ENCODE measurements at regions of chr1 and their contacts with region 1.

Region 1: DNA sequence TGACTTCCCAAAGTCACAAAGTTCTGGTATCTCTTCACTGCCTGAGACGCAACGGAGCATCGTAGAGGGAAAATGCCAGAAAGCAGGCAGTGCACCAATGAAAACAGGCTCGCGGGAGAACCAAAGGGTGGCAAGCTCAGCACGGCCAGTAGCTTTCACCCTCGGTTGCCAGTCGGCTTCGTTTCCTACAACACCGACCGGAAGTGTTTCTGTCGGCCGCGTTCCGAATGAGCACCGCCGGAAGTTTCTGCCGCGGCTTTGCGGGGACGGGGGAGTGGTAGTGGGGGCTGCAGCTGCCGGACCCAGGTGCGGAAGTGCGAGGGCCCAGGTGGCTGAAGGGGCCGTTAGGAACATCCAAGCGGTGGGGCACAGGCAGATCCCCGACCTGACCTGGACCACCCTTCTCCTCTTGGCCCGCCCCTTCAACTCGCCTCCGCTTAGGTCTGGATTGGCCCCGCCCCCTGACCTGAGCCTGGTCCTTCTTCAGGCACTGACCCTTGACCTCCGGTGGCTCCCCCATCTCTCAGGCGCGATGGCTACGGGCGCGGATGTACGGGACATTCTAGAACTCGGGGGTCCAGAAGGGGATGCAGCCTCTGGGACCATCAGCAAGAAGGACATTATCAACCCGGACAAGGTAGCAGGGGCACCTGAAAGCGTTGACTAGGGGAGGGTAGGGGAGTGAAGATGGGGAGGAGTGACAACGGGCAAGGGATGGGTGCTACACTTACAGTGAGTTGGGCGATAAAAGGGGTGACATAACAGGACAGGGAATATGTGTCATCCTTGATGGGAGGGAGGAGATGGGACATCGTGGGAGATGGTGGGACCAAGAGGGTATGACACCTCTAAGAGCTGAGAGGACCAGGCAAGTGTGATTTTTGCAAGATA is at the start of gene DMAP1:
- DNase-seq: peak; percentile 71
- H3K4me3 ChIP-seq: peak within 1 kb of the TSS; percentile 69 to 94 (median 72)
- H3K27ac ChIP-seq: peak within 1 kb of the TSS; percentile 29
- H3K4me1 ChIP-seq: peaks cover 18% of the 10 kb centered on the region
- H3K27me3 ChIP-seq: no peaks in the 10 kb centered on the region
- CTCF ChIP-seq: peak in 1 of 2 donors; percentile 30
- total RNA-seq, gene DMAP1: 21.5 to 30.0 TPM

Region 2: GRCh38 chr1:44008259-44008658 is 205.2 kb before region 1 on chr1:
- CTCF ChIA-PET with region 1: no interaction called
- dilution Hi-C with region 1: no loop called
- in situ Hi-C with region 1: no loop called
- intact Hi-C with region 1: loop called (anchors 5 kb)
- DNase-seq: no peak
- H3K4me3 ChIP-seq: no peak overlapping the region
- H3K27ac ChIP-seq: no peak overlapping the region
- H3K4me1 ChIP-seq: no peaks in the 10 kb centered on the region
- H3K27me3 ChIP-seq: no peaks in the 10 kb centered on the region
- CTCF ChIP-seq: no peak

Region 3: DNA sequence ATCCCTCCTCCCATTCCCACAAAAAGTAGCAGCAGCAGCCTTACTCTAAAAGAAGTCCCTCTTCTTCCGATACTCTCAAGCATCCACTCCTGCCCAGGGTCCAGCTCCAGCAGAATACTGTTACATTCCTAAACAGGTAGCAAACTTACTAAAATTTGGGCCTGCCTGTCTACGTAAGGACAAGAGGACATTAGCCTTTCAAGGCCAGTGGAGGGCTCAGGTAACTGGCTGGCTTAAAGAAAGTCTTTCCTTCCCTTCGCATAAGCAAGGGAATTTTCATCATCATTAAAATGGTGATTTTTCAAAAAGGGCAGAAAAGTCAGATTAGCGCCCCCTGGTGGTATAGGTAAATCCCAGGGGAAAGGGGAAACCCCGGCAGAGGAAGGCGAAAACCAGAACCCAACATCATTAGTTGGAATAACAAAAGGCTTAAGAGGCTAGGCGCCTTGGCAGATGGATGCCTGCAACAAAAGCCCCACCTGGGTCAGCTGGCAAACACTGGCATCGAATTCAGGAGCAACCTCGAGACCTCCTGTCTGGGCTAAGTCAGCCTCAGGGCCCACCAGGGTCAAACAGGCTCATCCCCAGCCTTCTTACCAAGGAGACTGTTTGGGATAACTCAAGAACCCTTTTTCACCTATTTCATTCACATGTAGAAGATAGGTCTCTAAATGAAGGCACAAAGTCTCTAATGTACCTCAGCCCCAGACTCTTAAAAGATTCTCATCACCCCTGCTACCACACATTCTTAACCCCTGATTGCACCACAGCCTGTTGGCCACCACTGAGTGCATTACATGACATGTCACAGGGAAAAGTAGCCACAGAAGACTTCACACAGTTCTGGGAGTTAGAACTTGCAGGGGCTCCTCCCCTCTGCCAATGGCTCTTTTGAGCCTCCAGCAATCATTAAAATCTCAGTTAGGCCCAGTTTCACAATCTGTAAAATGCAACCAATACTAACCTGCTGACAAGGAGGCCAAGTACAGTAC is 104.9 kb after region 1 on chr1:
- CTCF ChIA-PET with region 1: no interaction called
- dilution Hi-C with region 1: no loop called
- in situ Hi-C with region 1: no loop called
- intact Hi-C with region 1: loop called (anchors 1 kb)
- DNase-seq: peak; percentile 24
- H3K4me3 ChIP-seq: no peak overlapping the region
- H3K27ac ChIP-seq: no peak overlapping the region
- H3K4me1 ChIP-seq: no peaks in the 10 kb centered on the region
- H3K27me3 ChIP-seq: no peaks in the 10 kb centered on the region
- CTCF ChIP-seq: peak; percentile 76 to 81

Region 4: GRCh38 chr1:44377925-44378784 is 164.7 kb after region 1 on chr1:
- CTCF ChIA-PET with region 1: interaction called, 3 read pairs
- dilution Hi-C with region 1: no loop called
- in situ Hi-C with region 1: no loop called
- intact Hi-C with region 1: loop called (anchors 1 kb)
- DNase-seq: peak; percentile 15
- H3K4me3 ChIP-seq: no peak overlapping the region
- H3K27ac ChIP-seq: no peak overlapping the region
- H3K4me1 ChIP-seq: no peaks in the 10 kb centered on the region
- H3K27me3 ChIP-seq: peaks cover 4% of the 10 kb centered on the region
- CTCF ChIP-seq: peak; percentile 75 to 81

Region 5: DNA sequence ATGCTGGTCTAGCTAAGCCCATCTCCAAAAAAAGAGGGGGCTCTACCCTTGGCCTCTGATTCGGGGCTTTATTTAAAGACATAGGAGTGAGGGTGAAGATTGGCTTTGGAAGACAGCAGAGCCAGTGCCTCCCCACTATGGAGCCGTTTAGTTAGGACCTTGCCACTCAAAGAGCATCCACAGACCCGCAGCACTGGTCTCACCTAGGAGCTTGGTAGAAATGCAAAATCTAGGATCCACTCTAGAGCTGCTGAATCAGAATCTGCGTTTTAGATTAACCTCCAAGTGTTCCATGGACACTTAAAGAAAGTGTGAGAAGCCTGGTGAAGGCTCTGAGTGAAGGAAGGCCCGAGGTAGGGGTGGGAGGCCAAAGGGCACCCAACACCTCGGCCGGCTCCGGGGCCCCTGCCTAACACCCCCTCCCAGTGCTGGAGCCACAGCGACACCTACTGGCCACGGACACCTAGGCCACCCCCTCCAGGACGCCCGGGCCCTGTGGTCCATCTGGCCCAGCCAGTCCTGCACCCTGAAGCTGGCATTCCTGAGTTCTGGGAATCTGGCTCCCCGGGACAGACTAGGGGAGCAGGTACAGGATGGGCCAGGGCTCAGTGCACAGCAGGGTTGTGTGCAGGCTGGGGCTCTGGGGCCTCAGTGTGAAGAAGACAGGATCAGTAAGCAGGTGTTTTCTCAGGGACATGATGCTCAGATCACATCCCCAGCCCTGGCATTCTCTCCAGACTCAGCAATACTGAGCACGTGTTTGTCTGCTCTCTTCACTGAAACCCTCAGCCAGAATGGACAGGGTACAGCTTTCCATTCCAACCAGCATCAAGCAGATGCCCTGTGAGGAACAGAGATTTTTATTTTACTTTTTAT is 381.6 kb after region 1 on chr1:
- CTCF ChIA-PET with region 1: no interaction called
- dilution Hi-C with region 1: no loop called
- in situ Hi-C with region 1: loop called (anchors 10 kb)
- intact Hi-C with region 1: loop called (anchors 1 kb)
- DNase-seq: peak; percentile 33
- H3K4me3 ChIP-seq: no peak overlapping the region
- H3K27ac ChIP-seq: no peak overlapping the region
- H3K4me1 ChIP-seq: no peaks in the 10 kb centered on the region
- H3K27me3 ChIP-seq: peaks cover 8% of the 10 kb centered on the region
- CTCF ChIP-seq: peak; percentile 87 to 97

Region 6: GRCh38 chr1:44714944-44715571 is 501.6 kb after region 1 on chr1:
- CTCF ChIA-PET with region 1: no interaction called
- dilution Hi-C with region 1: no loop called
- in situ Hi-C with region 1: no loop called
- intact Hi-C with region 1: no loop called
- DNase-seq: peak; percentile 66
- H3K4me3 ChIP-seq: no peak overlapping the region
- H3K27ac ChIP-seq: no peak overlapping the region
- H3K4me1 ChIP-seq: no peaks in the 10 kb centered on the region
- H3K27me3 ChIP-seq: no peaks in the 10 kb centered on the region
- CTCF ChIP-seq: peak; percentile 94 to 99